T-cell (primary cell): ENCODE measurements at regions of chr9 and their contacts with region 1.

Region 1: GRCh38 chr9:137095664-137096517 is 9.1 kb downstream of the MAN1B1 start:
- DNase-seq: peak; percentile 67 to 94 (median 88)
- ATAC-seq: peak; percentile 98 to 99 (median 98)
- H3K4me3 ChIP-seq: peak overlapping the region; percentile 39 to 55
- H3K4me3 Mint-ChIP-seq: peak overlapping the region; percentile 79 to 84 (median 81)
- H3K27ac ChIP-seq: peak overlapping the region; percentile 86
- H3K27ac Mint-ChIP-seq: peak overlapping the region; percentile 94 to 96
- H3K4me1 ChIP-seq: peaks cover 6 to 28% of the 10 kb centered on the region in 2 experiments
- H3K4me1 Mint-ChIP-seq: peaks cover 16 to 27% (median 17%) of the 10 kb centered on the region in 3 donors
- H3K27me3 ChIP-seq: no peaks in the 10 kb centered on the region
- H3K27me3 Mint-ChIP-seq: no peaks in the 10 kb centered on the region

Region 2: DNA sequence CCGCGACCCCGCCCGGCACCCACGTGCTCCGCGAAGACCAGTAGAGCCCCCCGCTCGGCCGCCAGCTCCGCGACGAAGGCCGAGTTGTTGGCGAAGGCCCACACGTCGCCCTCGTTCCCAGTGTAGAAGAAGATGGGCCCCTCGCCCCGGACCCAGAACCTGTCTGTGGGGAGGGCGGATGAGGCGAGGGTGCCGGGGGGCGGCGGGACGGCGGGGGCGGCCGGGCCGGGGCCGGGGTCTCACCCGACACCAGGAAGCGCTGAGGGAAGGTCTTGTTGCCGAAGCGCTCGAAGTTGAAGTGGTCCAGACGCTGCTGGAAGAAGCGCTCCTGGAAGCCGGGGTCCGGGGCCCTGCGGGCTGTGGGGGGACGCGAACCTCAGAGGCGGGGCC is 18.3 kb after region 1 on chr9:
- CTCF ChIA-PET with region 1: interaction called in 1 of 2 experiments, 3 read pairs
- POLR2A ChIA-PET with region 1: interaction called in 1 of 2 experiments, 11 read pairs
- DNase-seq: no peak
- ATAC-seq: peak; percentile 13 to 42 (median 16)
- H3K4me3 ChIP-seq: peak overlapping the region; percentile 44 to 47
- H3K4me3 Mint-ChIP-seq: peak overlapping the region; percentile 49 to 71 (median 68)
- H3K27ac ChIP-seq: no peak overlapping the region
- H3K27ac Mint-ChIP-seq: no peak overlapping the region
- H3K4me1 ChIP-seq: peaks cover 4 to 27% of the 10 kb centered on the region in 2 experiments
- H3K4me1 Mint-ChIP-seq: peaks cover 5 to 10% (median 5%) of the 10 kb centered on the region in 3 donors
- H3K27me3 ChIP-seq: peaks cover 0 to 2% of the 10 kb centered on the region in 2 experiments
- H3K27me3 Mint-ChIP-seq: no peaks in the 10 kb centered on the region

Region 3: DNA sequence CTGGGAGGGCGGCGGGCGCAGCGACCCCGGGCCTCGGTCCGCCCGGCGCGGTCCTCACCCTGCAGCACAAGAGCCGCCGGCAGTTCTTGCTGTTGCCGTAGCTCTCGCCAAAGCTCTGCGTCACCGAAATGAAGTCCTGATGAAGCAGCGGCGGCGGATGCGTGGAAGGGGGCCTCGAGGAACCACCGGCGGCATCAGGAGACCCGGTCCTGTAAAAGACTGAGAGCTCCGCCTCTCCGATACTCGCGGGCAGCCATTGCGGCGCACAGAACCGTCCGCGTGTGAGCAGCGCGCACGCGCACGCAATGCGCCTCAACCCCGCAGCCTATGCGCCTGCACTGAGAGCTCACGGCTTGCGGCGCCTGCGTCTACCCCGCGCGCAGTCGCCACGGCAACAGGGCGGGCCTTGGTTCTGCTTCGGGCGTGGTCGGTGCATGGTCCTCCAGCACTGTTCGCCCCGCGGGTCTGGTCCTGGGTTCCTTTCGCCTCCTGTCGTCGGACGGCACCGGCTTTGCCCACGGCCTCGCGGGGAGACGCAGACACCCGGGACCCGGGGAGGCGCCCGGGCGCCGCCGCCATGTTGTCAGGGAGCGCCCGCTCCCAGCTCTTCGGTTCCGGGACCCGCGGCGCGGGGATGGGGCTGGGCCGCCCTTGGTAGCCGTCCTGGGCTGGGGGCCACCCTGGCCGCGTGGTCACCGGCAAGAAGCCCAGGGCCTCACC is 33.7 kb after region 1 on chr9:
- CTCF ChIA-PET with region 1: interaction called in 1 of 2 experiments, 15 read pairs
- POLR2A ChIA-PET with region 1: interaction called in 1 of 2 experiments, 3 read pairs
- DNase-seq: peak; percentile 78 to 94 (median 87)
- ATAC-seq: peak; percentile 94 to 98 (median 98)
- H3K4me3 ChIP-seq: peak overlapping the region; percentile 55 to 71
- H3K4me3 Mint-ChIP-seq: peak overlapping the region; percentile 82 to 92 (median 85)
- H3K27ac ChIP-seq: peak overlapping the region; percentile 67
- H3K27ac Mint-ChIP-seq: peak overlapping the region; percentile 80 to 84
- H3K4me1 ChIP-seq: peaks cover 22 to 35% of the 10 kb centered on the region in 2 experiments
- H3K4me1 Mint-ChIP-seq: peaks cover 27 to 32% (median 30%) of the 10 kb centered on the region in 3 donors
- H3K27me3 ChIP-seq: peaks cover 0 to 36% of the 10 kb centered on the region in 2 experiments
- H3K27me3 Mint-ChIP-seq: peaks cover 3 to 11% of the 10 kb centered on the region in 2 donors